ENCODE measurements at regions of chr15 and their contacts with region 1.

Region 1: GRCh38 chr15:65395567-65396185 is 17.9 kb upstream of the IGDCC3 start:
- DNase-seq: no peak
- H3K4me3 ChIP-seq: peak overlapping the region in 33 of 59 donors; percentile 4 to 56 (median 28)
- H3K27ac ChIP-seq: no peak overlapping the region
- H3K27me3 ChIP-seq: peaks cover 0 to 26% (median 5%) of the 10 kb centered on the region in 45 donors
- CTCF ChIP-seq: no peak

Region 2: DNA sequence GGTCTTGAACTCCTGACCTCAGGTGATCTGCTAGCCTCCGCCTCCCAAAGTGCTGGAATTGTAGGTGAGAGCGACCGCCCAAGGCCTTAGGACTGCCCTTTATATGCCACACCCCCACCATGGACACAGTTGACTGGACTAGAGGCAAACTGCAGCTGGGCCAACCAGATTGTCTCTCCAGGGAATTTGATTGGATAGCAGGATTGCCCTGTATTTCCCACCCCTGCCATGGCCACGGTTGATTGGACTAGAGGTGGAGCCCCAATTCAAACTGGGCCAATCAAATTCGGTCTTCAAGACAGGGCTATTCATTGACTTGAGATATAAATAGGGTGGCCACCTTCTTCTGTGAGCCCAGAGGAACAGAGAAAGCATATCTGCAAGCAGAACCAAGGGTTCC is 203.7 kb before region 1 on chr15:
- intact Hi-C with region 1: loop called in 1 of 2 experiments (anchors 10 kb)
- DNase-seq: no peak
- H3K4me3 ChIP-seq: no peak overlapping the region
- H3K27ac ChIP-seq: no peak overlapping the region
- H3K27me3 ChIP-seq: no peaks in the 10 kb centered on the region
- CTCF ChIP-seq: no peak

Region 3: DNA sequence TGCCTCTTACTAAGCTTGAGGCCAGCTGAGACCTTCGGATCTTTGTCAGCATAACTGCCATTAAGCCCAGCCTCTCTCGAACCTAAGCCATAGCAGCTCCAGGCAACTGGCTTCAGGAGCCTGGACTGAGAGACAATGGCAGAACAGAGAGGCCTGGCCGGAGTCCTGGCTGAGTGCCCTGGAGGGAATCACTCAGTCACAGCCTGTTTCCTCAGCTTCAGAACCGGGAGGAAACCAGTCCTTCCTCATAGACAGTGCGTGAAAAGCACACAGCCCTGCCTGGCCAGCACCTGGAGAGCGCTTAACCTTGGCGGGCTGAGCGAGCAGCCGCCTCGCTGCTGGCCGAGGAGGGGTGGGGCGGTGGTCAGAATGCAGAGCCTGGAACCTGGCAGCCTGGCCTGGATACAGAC is 69.6 kb before region 1 on chr15:
- intact Hi-C with region 1: no loop called
- DNase-seq: peak in 8 of 10 donors; percentile 37 to 74 (median 58)
- H3K4me3 ChIP-seq: peak overlapping the region in 7 of 59 donors; percentile 16 to 31 (median 28)
- H3K27ac ChIP-seq: peak overlapping the region in 14 of 59 donors; percentile 6 to 66 (median 39)
- H3K27me3 ChIP-seq: no peaks in the 10 kb centered on the region
- CTCF ChIP-seq: no peak

Region 4: DNA sequence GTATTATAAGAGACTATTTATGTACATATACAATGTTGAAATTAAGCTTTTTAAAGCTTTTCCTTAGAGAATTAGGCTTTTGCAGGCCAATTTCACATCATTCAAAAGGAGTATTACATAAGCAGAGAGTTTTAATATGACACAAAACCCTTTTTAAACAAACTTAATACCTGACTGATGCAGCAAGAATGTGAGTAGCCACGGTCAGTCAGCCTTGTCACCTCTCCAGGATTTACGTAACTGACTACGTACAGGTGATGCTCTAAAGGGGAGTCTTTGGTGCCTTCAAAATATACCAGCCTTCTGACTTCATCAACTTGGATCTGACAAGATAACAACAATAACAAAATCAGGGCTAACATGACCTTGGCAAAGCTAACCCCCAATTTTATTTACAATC is 71.2 kb after region 1 on chr15:
- intact Hi-C with region 1: no loop called
- DNase-seq: no peak
- H3K4me3 ChIP-seq: no peak overlapping the region
- H3K27ac ChIP-seq: no peak overlapping the region
- H3K27me3 ChIP-seq: no peaks in the 10 kb centered on the region
- CTCF ChIP-seq: no peak

Measured in dorsolateral prefrontal cortex (tissue), 120 donors.